PC-9 (cell line): ENCODE measurements at regions of chr5 and their contacts with region 1.

Region 1: GRCh38 chr5:169474226-169474625 is 109.3 kb upstream of the SPDL1 start:
- DNase-seq: no peak
- H3K4me3 ChIP-seq: no peak overlapping the region
- H3K27ac ChIP-seq: no peak overlapping the region
- H3K4me1 ChIP-seq: no peaks in the 10 kb centered on the region
- H3K27me3 ChIP-seq: no peaks in the 10 kb centered on the region
- CTCF ChIP-seq: no peak

Region 2: GRCh38 chr5:169458221-169458620 is 16.0 kb before region 1 on chr5:
- CTCF ChIA-PET with region 1: no interaction called
- POLR2A ChIA-PET with region 1: no interaction called
- intact Hi-C with region 1: loop called (anchors 1 kb)
- DNase-seq: no peak
- H3K4me3 ChIP-seq: no peak overlapping the region
- H3K27ac ChIP-seq: no peak overlapping the region
- H3K4me1 ChIP-seq: no peaks in the 10 kb centered on the region
- H3K27me3 ChIP-seq: no peaks in the 10 kb centered on the region
- CTCF ChIP-seq: no peak

Region 3: DNA sequence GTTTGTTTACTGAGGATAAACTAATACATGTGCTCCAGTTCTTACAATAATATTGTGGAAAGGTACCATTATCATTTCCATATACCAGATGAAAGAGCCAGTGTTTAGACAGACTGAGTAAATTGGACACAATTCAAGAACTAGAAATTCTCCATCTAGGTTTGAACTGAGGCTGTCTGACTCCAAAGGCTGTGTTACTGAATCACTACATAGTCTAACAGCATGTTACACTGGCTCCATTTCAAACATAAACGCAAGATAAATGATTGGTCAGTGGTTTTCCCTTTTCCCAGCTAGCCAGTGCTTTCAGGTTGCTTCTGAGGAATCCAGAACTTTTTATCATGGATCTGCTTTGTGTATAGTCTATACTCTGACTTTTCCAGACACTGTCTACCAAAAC is 117.4 kb after region 1 on chr5:
- CTCF ChIA-PET with region 1: no interaction called
- POLR2A ChIA-PET with region 1: no interaction called
- intact Hi-C with region 1: no loop called
- DNase-seq: no peak
- H3K4me3 ChIP-seq: no peak overlapping the region
- H3K27ac ChIP-seq: no peak overlapping the region
- H3K4me1 ChIP-seq: peaks cover 8% of the 10 kb centered on the region
- H3K27me3 ChIP-seq: no peaks in the 10 kb centered on the region
- CTCF ChIP-seq: no peak